Panc1 (cell line): ENCODE measurements at regions of chr11 and their contacts with region 1.

Region 1: GRCh38 chr11:105862736-105863367 is 159.2 kb downstream of the MSANTD4 start:
- DNase-seq: peak; percentile 52
- ATAC-seq: peak; percentile 72
- H3K4me3 ChIP-seq: no peak overlapping the region
- H3K27ac ChIP-seq: no peak overlapping the region
- H3K4me1 ChIP-seq: no peaks in the 10 kb centered on the region
- H3K27me3 ChIP-seq: peaks cover 4% of the 10 kb centered on the region; the same call in 1 of the 2 replicates
- CTCF ChIP-seq: peak; percentile 74; the same call in 1 of the 2 replicates

Region 2: DNA sequence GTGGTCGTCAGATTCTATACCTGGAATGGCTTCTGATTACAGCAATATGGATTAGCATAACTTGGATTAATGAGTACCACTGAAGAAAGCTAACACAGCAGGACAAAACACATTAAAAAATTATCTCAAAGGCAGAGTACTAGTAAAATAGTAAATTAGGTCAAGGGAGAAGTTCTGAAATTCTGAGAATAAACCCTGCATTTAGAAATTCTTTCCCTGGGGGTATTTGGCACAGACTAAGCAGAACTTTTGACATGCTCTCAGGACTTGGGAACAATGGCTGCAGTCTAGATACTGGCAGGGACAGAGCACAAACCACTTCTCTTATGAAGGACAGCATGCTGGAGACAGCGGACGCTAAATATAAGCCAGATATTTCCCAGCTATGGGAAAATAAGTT is 338.6 kb before region 1 on chr11:
- CTCF ChIA-PET with region 1: no interaction called
- POLR2A ChIA-PET with region 1: interaction called, 3 read pairs
- in situ Hi-C with region 1: no loop called
- intact Hi-C with region 1: loop called (anchors 10 kb)
- DNase-seq: no peak
- ATAC-seq: no peak
- H3K4me3 ChIP-seq: no peak overlapping the region
- H3K27ac ChIP-seq: no peak overlapping the region
- H3K4me1 ChIP-seq: no peaks in the 10 kb centered on the region
- H3K27me3 ChIP-seq: no peaks in the 10 kb centered on the region
- CTCF ChIP-seq: no peak

Region 3: DNA sequence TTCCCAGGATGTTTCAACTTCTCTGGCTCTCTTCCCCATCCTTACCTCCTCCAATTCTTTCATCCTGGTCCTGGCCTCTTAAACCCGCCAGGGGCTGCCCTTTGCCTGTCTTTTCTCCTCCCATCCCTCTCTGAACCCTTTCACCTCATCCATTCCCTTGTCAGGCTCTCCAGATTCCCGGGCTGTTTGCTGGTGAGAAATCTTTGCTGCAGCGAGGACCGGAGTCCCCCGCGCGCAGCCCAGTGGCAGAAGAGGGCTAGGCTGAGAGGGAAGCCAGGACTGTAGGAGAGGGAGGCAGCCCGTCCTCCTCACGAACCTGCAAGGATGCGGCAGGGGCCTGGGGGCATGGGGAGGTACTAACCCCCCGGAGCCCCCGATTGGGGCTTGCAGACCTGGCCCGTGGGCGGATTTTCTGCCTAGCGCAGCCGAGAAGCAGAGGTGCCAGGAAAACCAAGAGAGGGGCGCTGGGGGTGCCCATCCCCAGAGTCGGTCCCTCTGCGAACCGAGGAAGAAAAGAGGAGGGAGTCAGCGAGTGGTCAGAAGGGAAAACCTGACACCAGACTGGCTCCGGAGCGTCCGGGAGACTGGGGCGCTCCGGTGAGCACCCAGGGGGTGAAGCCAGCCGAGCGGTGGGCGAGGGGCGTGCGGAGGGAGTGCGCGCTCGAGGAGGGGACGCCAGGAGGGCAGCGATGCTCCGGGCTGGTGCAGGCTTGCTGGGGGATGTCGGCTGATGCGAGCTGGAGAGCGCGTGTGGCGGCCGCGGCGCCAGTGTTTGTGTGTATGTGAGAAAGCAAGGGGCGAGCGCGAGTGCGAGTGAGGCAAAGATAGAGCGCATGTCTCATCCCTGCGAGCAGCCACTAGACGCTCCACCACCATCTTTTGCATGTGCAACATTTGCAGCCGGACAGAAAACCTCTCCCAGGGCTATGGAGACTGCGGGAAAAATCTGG is 252.7 kb before region 1 on chr11 and contains the start of gene GRIA4:
- CTCF ChIA-PET with region 1: no interaction called
- POLR2A ChIA-PET with region 1: no interaction called
- in situ Hi-C with region 1: no loop called
- intact Hi-C with region 1: loop called (anchors 2 kb)
- DNase-seq: no peak
- ATAC-seq: peak; percentile 85
- H3K4me3 ChIP-seq: peak within 1 kb of the TSS; percentile 32 to 53
- H3K27ac ChIP-seq: no peak within 1 kb of the TSS
- H3K4me1 ChIP-seq: peaks cover 8% of the 10 kb centered on the region; the same call in 1 of the 2 replicates
- H3K27me3 ChIP-seq: peaks cover 7% of the 10 kb centered on the region; the same call in 1 of the 2 replicates
- CTCF ChIP-seq: no peak
- total RNA-seq, gene GRIA4: not detected

Region 4: GRCh38 chr11:106271686-106272085 is 408.8 kb after region 1 on chr11:
- CTCF ChIA-PET with region 1: no interaction called
- POLR2A ChIA-PET with region 1: no interaction called
- in situ Hi-C with region 1: no loop called
- intact Hi-C with region 1: no loop called
- DNase-seq: no peak
- ATAC-seq: no peak
- H3K4me3 ChIP-seq: no peak overlapping the region
- H3K27ac ChIP-seq: no peak overlapping the region
- H3K4me1 ChIP-seq: no peaks in the 10 kb centered on the region
- H3K27me3 ChIP-seq: no peaks in the 10 kb centered on the region
- CTCF ChIP-seq: no peak